Activated T-helper 2 cell treated with anti-CD3 and anti-CD28 coated beads, Interferon-gamma antibody, Interleukin-2, Interleukin-4, amounts not matched to agents 10 μg/mL and 5 μg/mL and 100 μg/mL, durations not matched to agents 14 hours and 24 hours and 36 hours (primary cell): ENCODE measurements at regions of chr22 and their contacts with region 1.

Region 1: DNA sequence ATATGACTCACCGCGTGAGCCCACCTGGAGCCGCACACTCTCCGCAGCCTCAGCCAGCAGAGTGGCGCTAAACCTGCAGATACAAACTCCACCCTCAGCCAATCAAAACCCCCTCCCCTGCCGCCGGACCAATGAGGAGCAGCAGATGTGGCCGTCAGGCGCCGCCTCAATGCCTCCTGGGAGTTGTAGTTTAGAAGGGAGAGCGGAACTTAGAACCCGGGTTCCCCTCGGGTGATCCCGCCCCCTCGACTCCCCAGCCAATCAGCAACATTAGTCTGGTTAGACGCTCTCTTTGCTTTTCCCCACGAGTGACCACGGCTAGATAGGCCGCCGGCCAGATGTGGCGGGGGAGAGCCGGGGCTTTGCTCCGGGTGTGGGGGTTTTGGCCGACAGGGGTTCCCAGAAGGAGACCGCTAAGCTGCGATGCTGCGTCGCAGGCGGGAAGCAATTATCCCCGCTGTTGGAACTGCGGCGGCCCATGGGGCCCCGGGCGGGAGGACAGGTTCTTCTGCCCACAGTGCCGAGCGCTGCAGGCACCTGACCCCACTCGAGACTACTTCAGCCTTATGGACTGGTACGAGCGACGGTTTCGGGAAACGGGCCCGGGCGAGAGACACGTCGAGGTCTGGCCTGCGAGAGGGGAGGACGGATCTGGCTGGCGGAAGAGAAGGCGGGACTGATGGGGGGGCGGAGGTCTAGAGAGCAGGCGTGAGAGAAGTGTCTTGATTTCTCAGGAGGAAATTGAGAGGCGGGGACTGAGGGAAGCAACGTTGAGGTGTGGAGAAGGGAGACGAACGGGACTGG is at the starts of genes CHEK2 and HSCB:
- DNase-seq: peak; percentile 97
- H3K4me3 Mint-ChIP-seq: peak within 1 kb of the TSS; percentile 87
- H3K27ac Mint-ChIP-seq: peak within 1 kb of the TSS; percentile 83
- H3K4me1 Mint-ChIP-seq: peaks cover 36% of the 10 kb centered on the region
- H3K27me3 Mint-ChIP-seq: no peaks in the 10 kb centered on the region
- total RNA-seq, gene CHEK2: 33.7 and 33.8 TPM in 2 replicates
- total RNA-seq, gene HSCB: 14.1 and 14.6 TPM in 2 replicates

Region 2: DNA sequence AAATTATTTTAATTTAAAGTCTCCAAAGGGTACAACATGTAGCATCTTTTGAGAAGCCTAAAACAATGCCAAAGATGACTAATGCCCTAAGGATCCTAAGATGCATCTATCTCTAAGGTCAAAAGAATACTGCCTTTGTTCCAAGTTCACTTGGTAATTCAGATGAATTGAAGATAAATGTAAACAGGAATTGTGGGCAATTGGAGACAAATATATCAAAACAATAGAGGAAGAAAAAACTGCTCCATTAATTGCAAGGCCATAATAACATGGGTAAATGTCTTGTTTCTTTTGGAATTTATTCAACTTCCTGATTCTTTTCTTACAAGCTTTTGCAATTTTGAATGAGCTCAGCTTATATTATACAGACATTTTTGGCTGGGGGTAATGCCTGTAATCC is 401.0 kb before region 1 on chr22:
- intact Hi-C with region 1: no loop called
- DNase-seq: no peak
- H3K4me3 Mint-ChIP-seq: no peak overlapping the region
- H3K27ac Mint-ChIP-seq: no peak overlapping the region
- H3K4me1 Mint-ChIP-seq: no peaks in the 10 kb centered on the region
- H3K27me3 Mint-ChIP-seq: peaks cover 11% of the 10 kb centered on the region

Region 3: GRCh38 chr22:28772633-28773460 is 30.9 kb after region 1 on chr22 and contains the start of gene CCDC117:
- intact Hi-C with region 1: loop called (anchors 1 kb)
- DNase-seq: peak; percentile 89
- H3K4me3 Mint-ChIP-seq: peak within 1 kb of the TSS; percentile 99
- H3K27ac Mint-ChIP-seq: peak within 1 kb of the TSS; percentile 100
- H3K4me1 Mint-ChIP-seq: peaks cover 19% of the 10 kb centered on the region
- H3K27me3 Mint-ChIP-seq: no peaks in the 10 kb centered on the region
- total RNA-seq, gene CCDC117: 33.9 and 38.6 TPM in 2 replicates

Region 4: GRCh38 chr22:28882878-28883656 is 141.1 kb after region 1 on chr22 and contains the start of gene ZNRF3:
- intact Hi-C with region 1: loop called (anchors 5 kb)
- DNase-seq: peak; percentile 76
- H3K4me3 Mint-ChIP-seq: peak within 1 kb of the TSS; percentile 72
- H3K27ac Mint-ChIP-seq: no peak within 1 kb of the TSS
- H3K4me1 Mint-ChIP-seq: peaks cover 12% of the 10 kb centered on the region
- H3K27me3 Mint-ChIP-seq: peaks cover 63% of the 10 kb centered on the region
- total RNA-seq, gene ZNRF3: 0.82 and 1.1 TPM in 2 replicates